PC-3 (cell line): ENCODE measurements at regions of chr11 and their contacts with region 1.

Region 1: DNA sequence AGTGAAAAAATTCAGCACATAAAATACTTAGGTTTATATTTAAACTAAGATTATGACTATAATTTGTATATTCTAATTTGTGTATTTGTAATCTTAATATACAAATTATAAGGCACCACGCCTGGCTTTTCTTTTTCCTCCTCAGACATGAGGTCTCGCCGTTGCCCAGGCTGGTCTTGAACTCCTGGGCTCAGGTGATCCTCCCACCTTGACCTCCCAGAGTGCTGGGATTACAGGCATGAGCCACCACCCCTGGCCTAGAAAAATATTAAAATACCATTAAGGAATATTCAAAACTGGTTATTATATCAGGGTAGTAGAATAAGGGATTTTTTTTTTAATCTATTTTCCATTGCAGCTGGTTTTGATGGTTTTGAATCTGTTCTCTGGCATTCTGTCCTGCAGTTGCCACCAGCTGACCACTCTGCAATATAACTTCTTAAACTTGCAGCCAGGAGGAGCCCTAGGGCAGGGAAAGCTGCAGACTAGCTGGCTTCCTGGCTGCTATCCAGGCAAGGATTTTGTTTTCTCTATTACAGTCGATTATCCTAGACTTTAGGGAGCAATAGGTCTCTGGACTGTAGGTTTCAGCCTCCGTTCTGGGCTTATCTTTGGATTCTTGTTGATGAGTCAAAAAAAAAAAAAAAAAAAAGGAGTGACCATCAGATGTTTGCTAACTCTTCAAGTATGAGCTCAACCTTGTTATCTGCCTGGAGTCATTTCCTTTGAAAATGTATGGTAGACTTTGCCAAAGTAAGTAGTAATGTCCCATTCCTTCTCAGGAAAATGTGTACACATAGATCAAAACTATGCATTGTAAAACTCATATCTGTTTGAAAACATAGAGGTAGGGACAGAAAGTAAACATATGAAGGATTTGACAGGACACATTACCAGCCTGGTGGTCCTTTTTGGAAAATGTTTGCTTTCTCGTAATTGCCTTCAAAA is 13.2 kb downstream of the POLA2 start:
- DNase-seq: peak; percentile 96
- ATAC-seq: peak; percentile 66
- H3K4me3 ChIP-seq: no peak overlapping the region
- H3K27ac ChIP-seq: peak overlapping the region; percentile 64
- H3K4me1 ChIP-seq: peaks cover 47% of the 10 kb centered on the region
- H3K27me3 ChIP-seq: no peaks in the 10 kb centered on the region
- CTCF ChIP-seq: peak; percentile 94

Region 2: DNA sequence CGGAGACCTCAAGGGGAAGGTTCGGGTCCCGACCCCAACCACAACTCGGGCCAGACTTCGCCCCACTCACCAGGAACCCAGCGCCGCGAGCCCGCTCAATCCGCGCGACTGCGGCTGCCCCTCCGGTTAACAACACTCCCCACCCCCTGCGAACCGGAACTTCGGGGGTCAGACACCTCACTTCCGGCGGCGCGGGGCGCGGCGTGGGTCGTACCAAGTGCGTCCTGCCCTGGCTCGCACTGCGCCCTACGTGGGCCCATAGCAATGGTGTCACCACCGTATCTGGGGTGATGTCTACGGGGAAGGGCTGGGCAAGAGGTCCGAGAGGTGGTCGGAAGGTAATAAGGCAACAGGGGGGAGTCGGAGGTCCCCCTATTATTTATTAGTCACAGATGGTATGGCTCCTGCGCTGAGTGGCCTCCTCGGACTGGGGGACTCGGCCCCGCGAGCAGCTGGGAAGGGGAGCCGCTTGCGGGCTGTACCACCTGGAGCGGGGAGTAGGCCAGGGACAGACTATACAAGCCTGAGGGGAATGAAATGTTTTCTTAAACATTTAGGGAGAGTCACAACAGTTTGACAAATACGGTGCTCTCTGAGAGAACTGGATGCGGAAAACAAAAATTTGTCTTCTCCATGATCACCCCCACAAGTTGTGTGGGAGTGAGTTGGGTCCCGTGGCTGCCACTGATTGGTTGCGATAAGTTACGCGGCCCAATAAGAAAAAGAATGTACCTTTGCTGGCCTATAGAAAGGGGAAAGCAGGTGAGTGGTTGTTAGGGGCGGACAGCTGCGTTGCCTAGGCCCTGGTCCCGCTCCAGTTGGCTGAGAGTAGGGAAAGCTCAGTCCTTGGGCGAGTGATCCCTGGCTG is 140.4 kb before region 1 on chr11 and contains the start of gene SYVN1:
- CTCF ChIA-PET with region 1: no interaction called
- POLR2A ChIA-PET with region 1: interaction called, 11 read pairs
- intact Hi-C with region 1: no loop called
- DNase-seq: peak; percentile 99
- ATAC-seq: peak; percentile 91
- H3K4me3 ChIP-seq: peak within 1 kb of the TSS; percentile 90
- H3K27ac ChIP-seq: peak within 1 kb of the TSS; percentile 95
- H3K4me1 ChIP-seq: peaks cover 16% of the 10 kb centered on the region
- H3K27me3 ChIP-seq: no peaks in the 10 kb centered on the region
- CTCF ChIP-seq: no peak
- total RNA-seq, gene SYVN1: 22.3 and 33.2 TPM in 2 replicates

Region 3: DNA sequence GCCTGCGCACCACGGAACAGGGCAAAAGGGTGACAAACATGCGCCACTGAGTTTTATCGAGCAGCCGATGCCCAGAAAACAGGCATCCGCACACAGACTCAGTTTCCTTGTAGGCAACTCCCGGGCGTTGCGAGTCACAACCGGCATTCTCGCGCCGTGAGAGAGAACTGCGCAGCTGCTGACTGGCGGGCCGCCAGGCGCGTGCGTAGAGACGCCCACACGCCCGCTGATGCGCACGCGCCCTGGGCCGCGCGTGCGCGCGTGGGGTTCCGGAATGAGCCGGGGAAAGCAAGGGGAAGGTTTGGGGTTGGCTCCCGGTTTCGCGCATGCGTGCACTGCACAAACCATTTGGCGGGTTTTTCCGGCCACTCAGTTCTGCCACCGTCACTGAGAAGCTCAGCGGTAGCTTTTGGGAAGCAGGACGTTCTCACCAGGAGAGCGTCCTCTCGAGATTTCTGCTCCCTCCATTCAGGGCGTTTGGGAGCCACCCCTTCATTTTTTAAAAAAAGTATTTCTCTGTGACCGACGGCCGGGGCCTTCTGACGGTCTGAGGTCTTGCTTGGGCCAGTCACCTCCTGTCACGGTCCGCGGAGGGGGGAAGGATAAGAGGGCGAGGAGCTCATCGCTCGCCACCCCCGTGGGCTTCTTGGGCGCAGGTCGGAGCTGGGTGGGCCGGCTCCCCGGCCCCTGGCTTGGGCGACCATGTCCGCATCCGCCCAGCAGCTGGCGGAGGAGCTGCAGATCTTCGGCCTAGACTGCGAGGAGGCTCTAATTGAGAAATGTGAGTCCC is 13.2 kb before region 1 on chr11 and contains the start of gene POLA2:
- CTCF ChIA-PET with region 1: interaction called, 19 read pairs
- POLR2A ChIA-PET with region 1: interaction called, 23 read pairs
- intact Hi-C with region 1: no loop called
- DNase-seq: peak; percentile 100
- ATAC-seq: peak; percentile 91
- H3K4me3 ChIP-seq: peak within 1 kb of the TSS; percentile 93
- H3K27ac ChIP-seq: peak within 1 kb of the TSS; percentile 72
- H3K4me1 ChIP-seq: peaks cover 14% of the 10 kb centered on the region
- H3K27me3 ChIP-seq: no peaks in the 10 kb centered on the region
- CTCF ChIP-seq: no peak
- total RNA-seq, gene POLA2: 29.0 and 39.7 TPM in 2 replicates

Region 4: DNA sequence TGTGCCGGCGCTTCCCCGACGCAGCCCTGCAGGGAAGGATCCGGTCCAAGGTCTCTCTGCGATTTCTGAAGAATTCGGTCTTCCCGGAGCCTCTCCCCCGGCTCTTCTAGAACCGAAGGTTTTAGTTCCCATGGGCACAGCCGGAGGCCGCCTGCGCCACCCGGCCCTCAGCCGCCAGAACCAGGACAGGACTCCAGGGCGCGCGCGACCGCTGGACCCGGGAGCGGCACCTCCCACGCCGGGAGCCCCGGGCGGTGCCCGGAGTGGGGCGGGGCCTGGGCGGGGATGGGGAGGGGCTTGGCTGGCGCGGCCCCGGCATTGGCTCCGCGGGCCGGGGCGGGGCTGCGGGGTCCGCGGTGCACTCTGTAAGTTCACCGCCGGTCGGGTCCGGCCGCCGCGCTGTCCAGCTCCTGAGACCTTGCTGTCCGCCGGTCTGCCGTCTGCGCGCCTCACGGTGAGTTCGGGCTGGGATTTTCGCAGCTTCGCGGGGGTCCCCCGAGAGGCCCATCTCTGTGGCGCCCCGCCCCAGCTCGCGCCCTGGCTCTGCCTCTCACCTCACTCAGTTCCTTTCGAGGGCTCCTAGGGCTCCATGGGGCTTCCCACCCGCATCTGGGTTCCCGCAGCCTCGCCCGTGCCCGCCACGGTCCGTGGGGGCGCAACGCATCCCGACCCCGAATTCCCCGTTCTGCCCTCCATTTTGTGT is 39.6 kb after region 1 on chr11 and contains the start of gene CDC42EP2:
- CTCF ChIA-PET with region 1: interaction called, 266 read pairs
- POLR2A ChIA-PET with region 1: interaction called, 56 read pairs
- intact Hi-C with region 1: loop called (anchors 1 kb)
- DNase-seq: peak; percentile 94
- ATAC-seq: peak; percentile 67
- H3K4me3 ChIP-seq: peak within 1 kb of the TSS; percentile 72
- H3K27ac ChIP-seq: peak within 1 kb of the TSS; percentile 87
- H3K4me1 ChIP-seq: peaks cover 36% of the 10 kb centered on the region
- H3K27me3 ChIP-seq: no peaks in the 10 kb centered on the region
- CTCF ChIP-seq: no peak
- total RNA-seq, gene CDC42EP2: 16.6 and 25.7 TPM in 2 replicates

Region 5: DNA sequence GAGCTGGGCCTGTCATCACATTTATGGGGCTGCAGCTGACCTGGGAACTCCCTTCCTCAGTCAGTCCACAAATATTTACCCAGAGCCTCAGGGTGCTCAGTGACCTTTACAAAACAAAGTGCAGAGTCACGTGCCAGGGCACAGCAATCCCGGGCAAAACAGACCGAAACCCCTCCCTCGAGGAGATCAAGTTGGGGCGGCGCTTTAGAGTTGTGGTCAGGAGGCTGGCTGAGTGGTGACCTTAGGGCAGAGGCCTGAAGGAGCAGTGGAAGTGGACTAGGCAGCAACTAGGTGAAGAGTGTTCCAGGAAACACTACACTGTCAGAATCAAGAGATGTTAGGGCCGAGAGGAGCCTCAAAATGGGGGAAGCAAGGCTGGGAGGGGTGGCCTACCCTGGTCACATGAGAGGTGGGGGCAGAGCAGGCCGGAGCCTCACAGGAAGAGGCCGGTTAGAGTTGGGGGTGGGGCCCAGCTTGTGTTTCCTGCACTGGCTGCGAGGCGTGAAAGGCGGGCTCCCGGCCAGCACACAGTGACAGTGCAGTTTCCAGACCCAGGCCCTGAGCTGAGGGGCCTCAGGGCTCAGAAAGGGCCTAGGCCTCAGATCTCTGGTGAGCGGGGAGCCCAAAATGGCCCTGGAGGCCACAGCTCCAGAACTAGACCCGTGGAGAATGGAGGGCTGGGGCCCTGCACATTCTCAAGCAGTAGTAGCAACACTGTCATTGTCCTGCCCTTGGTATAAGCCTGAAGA is 143.9 kb after region 1 on chr11:
- CTCF ChIA-PET with region 1: interaction called, 16 read pairs
- POLR2A ChIA-PET with region 1: interaction called, 10 read pairs
- intact Hi-C with region 1: no loop called
- DNase-seq: peak; percentile 98
- ATAC-seq: peak; percentile 25
- H3K4me3 ChIP-seq: peak overlapping the region; percentile 41
- H3K27ac ChIP-seq: peak overlapping the region; percentile 99
- H3K4me1 ChIP-seq: peaks cover 53% of the 10 kb centered on the region
- H3K27me3 ChIP-seq: no peaks in the 10 kb centered on the region
- CTCF ChIP-seq: no peak